Spleen (tissue), 13 donors: ENCODE measurements at regions of chr2 and their contacts with region 1.

Region 1: DNA sequence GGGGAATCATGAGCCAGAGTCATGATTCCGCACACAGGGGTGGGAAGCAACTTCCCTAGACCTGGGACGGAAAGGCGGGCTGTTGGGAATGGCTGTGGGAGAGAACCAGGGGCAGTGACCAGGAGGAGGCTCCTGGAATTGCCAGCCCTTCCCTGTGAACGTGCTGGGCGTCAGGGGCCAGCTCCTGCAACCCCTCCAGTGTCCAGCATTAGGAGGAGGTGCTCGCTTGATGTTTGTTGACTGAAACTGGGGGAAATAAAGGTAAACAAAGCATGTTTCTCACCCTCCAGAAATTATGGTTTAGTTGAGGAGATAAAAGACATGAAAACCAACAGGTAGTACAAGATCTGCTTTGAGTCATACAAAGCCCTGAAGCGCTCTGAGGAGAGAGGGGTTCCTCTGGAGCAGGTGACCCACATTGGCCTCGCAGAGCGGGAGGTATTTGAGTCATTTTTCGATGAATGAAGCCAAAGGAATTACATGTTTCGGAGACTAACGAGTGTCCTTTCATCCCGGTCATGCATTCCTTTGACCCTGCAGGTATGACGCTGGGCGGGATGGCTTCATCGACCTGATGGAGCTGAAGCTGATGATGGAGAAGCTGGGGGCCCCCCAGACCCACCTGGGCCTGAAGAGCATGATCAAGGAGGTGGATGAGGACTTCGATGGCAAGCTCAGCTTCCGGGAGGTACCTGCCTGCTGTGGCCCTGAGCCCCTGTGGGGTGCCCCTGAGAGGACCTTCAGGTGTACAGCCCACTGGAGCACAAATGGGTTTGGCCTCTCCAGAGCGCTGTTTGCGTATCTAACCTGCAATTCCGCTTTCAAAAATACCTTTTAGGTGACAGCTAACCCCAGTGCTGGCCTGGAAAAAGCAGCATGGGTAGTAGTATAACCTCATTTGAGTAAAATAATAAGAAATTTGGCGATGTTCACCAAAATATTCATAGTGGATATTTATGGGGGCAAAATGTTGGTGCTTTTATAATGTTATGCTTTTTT is 29.2 kb downstream of the EFHD1 start:
- DNase-seq: no peak
- H3K4me3 ChIP-seq: no peak overlapping the region
- H3K27ac ChIP-seq: no peak overlapping the region
- H3K4me1 ChIP-seq: peaks cover 0 to 5% (median 0%) of the 10 kb centered on the region in 6 donors
- H3K27me3 ChIP-seq: no peaks in the 10 kb centered on the region
- CTCF ChIP-seq: no peak
- POLR2A ChIP-seq: no peak

Region 2: GRCh38 chr2:232611551-232612218 is 50.9 kb before region 1 on chr2:
- intact Hi-C with region 1: loop called (anchors 5 kb)
- DNase-seq: peak; percentile 88
- H3K4me3 ChIP-seq: no peak overlapping the region
- H3K27ac ChIP-seq: no peak overlapping the region
- H3K4me1 ChIP-seq: peaks cover 0 to 5% (median 0%) of the 10 kb centered on the region in 6 donors
- H3K27me3 ChIP-seq: no peaks in the 10 kb centered on the region
- CTCF ChIP-seq: peak; percentile 42 to 88 (median 81)
- POLR2A ChIP-seq: no peak